ENCODE measurements at regions of chr16 and their contacts with region 1.

Region 1: GRCh38 chr16:50210266-50211038 is 55.9 kb upstream of the ADCY7 start:
- DNase-seq: peak; percentile 87 to 89
- ATAC-seq: peak; percentile 89
- H3K4me3 ChIP-seq: no peak overlapping the region
- H3K27ac ChIP-seq: peak overlapping the region in 1 of 2 donors; percentile 32
- H3K4me1 ChIP-seq: peaks cover 0 to 3% of the 10 kb centered on the region in 2 donors
- H3K27me3 ChIP-seq: no peaks in the 10 kb centered on the region

Region 2: GRCh38 chr16:50024684-50025536 is 185.5 kb before region 1 on chr16 and contains the start of gene CNEP1R1:
- intact Hi-C with region 1: loop called (anchors 5 kb)
- DNase-seq: peak; percentile 96 to 97
- ATAC-seq: peak; percentile 100
- H3K4me3 ChIP-seq: peak within 1 kb of the TSS; percentile 71 to 92
- H3K27ac ChIP-seq: peak within 1 kb of the TSS in 1 of 2 donors; percentile 20
- H3K4me1 ChIP-seq: no peaks in the 10 kb centered on the region
- H3K27me3 ChIP-seq: no peaks in the 10 kb centered on the region
- total RNA-seq, gene CNEP1R1: 25.0 to 25.3 TPM

Region 3: GRCh38 chr16:50152807-50153452 is 57.5 kb before region 1 on chr16 and contains the start of gene TENT4B:
- intact Hi-C with region 1: loop called (anchors 2 to 5 kb)
- DNase-seq: peak; percentile 93 to 96
- ATAC-seq: peak; percentile 95
- H3K4me3 ChIP-seq: peak within 1 kb of the TSS; percentile 78 to 99
- H3K27ac ChIP-seq: peak within 1 kb of the TSS in 1 of 2 donors; percentile 91
- H3K4me1 ChIP-seq: no peaks in the 10 kb centered on the region
- H3K27me3 ChIP-seq: no peaks in the 10 kb centered on the region
- total RNA-seq, gene TENT4B: 13.2 to 13.9 TPM

Region 4: DNA sequence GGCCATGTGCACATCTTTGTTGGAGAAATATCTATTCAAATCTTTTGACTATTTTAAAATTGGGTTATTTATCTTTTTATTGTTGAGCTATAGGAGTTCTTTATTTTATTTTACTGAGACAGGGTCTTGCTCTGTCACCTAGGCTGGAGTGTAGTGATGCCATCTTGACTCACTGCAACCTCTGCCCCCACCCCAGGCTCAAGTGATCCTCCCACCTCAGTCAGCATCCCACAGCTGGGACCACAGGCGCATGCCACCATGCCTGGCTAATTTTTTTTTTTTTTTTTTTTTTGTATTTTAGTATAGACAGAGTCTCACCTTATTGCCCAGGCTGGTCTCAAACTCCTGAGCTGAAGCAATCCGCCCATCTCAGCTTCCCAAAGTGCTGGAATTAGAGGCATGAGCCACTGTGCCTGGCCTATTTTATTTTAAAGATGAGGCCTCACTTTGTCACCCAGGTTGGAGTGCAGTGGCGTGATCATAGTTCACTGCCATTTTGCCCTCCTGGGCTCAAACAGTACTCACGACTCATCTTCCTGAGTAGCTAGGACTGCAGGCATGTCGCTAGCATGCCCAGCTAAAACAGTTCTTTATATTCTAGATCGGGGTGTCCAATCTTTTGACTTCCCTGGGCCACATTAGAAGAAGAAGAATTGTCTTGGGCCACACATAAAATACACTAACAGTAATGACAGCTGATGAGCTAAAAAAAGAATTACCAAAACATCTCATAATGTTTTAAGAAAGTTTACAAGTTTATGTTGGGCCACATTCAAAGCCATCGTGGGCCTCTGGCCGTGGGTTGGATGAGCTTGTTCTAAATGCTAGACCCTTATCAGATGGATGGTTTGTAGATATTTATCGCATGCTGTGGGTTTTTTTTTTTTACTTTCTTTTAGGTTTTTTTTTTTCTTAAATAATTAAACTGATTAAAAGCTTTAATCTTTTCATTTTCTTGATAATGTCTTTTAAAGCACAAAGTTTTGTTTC is 43.6 kb before region 1 on chr16:
- intact Hi-C with region 1: no loop called
- DNase-seq: no peak
- ATAC-seq: no peak
- H3K4me3 ChIP-seq: no peak overlapping the region
- H3K27ac ChIP-seq: peak overlapping the region; percentile 26 to 60
- H3K4me1 ChIP-seq: peaks cover 0 to 3% of the 10 kb centered on the region in 2 donors
- H3K27me3 ChIP-seq: no peaks in the 10 kb centered on the region